AG04449 (cell line): ENCODE measurements at regions of chr9 and their contacts with region 1.

Region 1: GRCh38 chr9:78035383-78035993 is 3.9 kb upstream of the GNAQ start:
- DNase-seq: peak; percentile 45
- H3K4me3 ChIP-seq: no peak overlapping the region
- CTCF ChIP-seq: peak; percentile 72

Region 2: DNA sequence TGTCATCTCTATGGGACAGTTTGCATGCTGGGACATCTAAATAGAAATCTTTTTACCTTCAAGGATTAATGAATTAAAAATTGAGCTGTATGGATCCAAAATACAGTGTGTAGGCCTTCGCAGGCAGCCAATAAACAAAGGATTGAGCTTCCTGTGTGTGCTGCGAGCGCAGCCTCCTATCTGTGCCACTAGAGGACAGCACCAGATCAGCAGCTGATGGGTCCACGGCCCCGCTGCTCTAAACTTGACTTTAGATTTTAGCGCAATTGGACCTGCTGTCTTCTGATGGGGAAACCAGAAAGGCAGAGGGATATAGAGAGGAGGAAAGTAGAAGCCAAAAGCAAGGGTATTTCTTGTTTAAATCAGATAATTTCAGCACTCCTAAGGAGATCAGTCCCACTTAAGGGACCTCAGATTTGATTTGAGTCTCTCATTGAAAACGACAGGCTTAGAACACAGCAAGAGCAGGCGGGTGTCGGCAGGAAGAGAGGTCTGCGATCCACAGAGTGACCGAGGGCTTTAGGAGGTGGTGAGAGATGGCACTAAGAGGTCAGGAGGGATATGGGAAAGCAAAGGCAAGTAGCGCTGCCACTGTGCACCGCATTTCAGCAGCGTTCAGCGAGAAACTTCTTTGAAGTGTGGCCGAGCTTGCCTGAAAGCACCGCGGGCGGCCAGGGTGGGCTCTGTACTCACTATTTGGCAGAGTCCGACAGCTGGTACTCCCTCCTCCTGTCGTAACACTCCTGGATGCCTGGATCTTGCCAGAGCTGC is 601.6 kb before region 1 on chr9:
- CTCF ChIA-PET with region 1: interaction called, 15 read pairs
- POLR2A ChIA-PET with region 1: no interaction called
- DNase-seq: no peak
- H3K4me3 ChIP-seq: no peak overlapping the region; the same call in 1 of the 2 replicates
- CTCF ChIP-seq: peak; percentile 98

Region 3: GRCh38 chr9:77789891-77790290 is 245.6 kb before region 1 on chr9:
- CTCF ChIA-PET with region 1: interaction called, 10 read pairs
- POLR2A ChIA-PET with region 1: no interaction called
- DNase-seq: no peak
- H3K4me3 ChIP-seq: no peak overlapping the region
- CTCF ChIP-seq: no peak

Region 4: DNA sequence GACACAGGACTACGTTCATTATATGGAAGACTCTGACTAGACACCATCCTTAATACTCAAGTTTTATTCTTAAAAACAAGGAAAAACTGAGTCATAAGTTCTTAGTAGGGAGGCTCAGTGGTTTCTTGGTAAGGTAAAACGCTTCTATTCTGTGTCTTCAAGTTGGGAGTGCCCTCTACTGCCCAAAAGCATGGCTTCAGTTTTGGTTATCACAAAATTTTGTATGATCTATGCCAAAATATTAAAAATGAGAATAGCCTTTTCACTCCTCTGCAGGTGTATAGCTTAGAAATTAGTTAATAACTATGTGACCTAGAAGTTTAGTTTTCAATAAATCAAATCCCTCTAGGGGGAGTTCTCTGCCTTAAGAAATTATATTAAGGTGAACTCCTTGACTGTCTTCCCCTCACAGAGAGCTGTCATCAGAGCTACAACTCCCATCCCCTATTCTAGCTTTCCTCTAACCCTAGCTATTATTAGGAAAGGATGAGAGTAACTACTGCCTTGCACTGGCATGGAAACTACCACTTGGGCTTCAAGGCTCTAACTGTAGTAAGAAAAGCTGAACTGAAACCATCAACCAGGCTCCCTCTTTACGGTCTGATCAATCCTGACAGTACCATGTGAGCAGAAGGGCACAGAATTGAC is 193.6 kb before region 1 on chr9:
- CTCF ChIA-PET with region 1: interaction called, 20 read pairs
- POLR2A ChIA-PET with region 1: no interaction called
- DNase-seq: no peak
- H3K4me3 ChIP-seq: no peak overlapping the region
- CTCF ChIP-seq: peak; percentile 0

Region 5: DNA sequence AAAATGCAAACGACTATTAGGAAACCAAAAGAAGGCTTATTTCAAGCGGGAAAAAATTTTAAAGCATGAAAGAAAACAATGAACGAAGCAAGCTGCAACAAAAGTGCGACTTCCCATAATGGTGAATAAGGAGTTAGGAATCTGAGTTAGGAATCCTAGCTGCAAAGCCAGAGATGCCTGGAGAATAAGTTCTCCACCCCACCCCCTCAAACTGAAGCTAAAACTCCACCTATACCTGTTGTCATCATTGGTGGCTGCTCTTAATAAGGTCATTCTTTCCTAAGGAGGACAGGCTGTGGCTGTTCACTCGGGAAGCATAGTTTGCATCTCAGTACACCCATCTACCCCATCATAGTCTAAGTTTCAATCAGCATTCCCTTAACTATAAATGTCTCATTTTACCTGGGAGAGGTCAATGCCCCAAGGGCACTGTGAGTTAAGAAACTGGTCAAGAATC is 151.1 kb before region 1 on chr9:
- CTCF ChIA-PET with region 1: interaction called, 13 read pairs
- POLR2A ChIA-PET with region 1: no interaction called
- DNase-seq: no peak
- H3K4me3 ChIP-seq: no peak overlapping the region
- CTCF ChIP-seq: no peak

Region 6: GRCh38 chr9:77997611-77998284 is 37.7 kb before region 1 on chr9:
- CTCF ChIA-PET with region 1: interaction called, 10 read pairs
- POLR2A ChIA-PET with region 1: no interaction called
- DNase-seq: no peak
- H3K4me3 ChIP-seq: no peak overlapping the region
- CTCF ChIP-seq: no peak

Region 7: GRCh38 chr9:78053627-78054026 is 18.1 kb after region 1 on chr9:
- CTCF ChIA-PET with region 1: interaction called, 28 read pairs
- POLR2A ChIA-PET with region 1: no interaction called
- DNase-seq: no peak
- H3K4me3 ChIP-seq: no peak overlapping the region
- CTCF ChIP-seq: no peak